ENCODE measurements at regions of chr3 and their contacts with region 1.

Region 1: DNA sequence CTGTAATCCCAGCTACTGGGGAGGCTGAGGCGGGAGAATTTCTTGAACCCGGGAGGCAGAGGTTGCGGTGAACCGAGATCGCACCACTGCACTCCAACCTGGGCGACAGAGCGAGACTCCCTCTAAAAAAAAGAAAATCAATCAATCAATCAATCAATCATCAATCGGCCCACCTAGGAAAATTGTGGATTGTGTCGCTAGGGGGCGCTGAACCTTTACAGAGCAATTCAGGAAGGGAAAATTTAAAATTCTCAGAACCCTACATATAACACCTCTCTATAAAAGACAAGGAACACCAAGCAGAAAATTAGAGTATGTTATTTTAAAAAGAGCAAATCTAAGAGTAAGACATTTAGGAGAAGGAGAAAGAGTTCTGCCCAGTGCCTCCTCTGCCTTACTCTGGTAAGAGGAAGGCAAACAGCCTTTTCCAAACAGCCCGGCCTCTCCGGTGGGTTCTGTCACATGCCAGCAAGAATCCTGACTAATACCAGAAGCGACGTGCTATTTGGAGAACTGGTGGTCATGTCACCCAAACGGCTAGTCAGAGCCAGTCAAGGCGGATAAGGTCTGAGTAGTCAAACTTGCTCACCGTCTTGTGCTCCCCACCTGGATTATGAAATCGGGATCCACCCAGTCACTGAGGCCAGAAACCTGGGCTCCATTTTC is 22.3 kb upstream of the SMCO1 start:
- DNase-seq: peak in 1 of 2 donors; percentile 41
- H3K4me3 ChIP-seq: no peak overlapping the region
- H3K27ac ChIP-seq: no peak overlapping the region
- H3K4me1 ChIP-seq: no peaks in the 10 kb centered on the region
- H3K27me3 ChIP-seq: no peaks in the 10 kb centered on the region
- CTCF ChIP-seq: peak; percentile 56 to 57

Region 2: GRCh38 chr3:196502775-196503195 is 34.7 kb before region 1 on chr3:
- intact Hi-C with region 1: no loop called
- DNase-seq: peak; percentile 54 to 69
- H3K4me3 ChIP-seq: peak overlapping the region; percentile 87 to 98
- H3K27ac ChIP-seq: peak overlapping the region; percentile 95 to 97
- H3K4me1 ChIP-seq: peaks cover 0 to 41% (median 19%) of the 10 kb centered on the region in 4 donors
- H3K27me3 ChIP-seq: no peaks in the 10 kb centered on the region
- CTCF ChIP-seq: no peak

Region 3: DNA sequence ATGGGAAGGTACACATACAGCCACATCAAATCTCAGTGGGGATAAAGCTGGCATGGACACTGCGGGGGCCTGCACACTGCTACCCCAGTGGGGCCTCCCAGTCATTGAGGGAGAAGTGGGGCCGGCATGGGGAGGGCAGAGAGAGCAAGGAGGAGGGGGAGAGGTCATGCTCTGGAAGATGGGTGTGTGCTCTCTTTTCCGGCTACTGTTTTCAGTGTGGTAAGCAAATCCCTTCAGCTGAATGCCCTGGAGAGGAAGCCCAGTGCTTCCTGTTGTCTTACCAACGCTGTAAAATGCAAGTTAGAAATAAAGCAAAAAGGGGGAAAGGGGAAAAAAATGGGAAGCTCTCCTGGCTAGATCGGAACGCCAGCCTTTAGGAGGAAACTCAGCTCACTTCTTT is 132.9 kb after region 1 on chr3:
- intact Hi-C with region 1: loop called (anchors 10 kb)
- DNase-seq: peak in 1 of 2 donors; percentile 50
- H3K4me3 ChIP-seq: no peak overlapping the region
- H3K27ac ChIP-seq: no peak overlapping the region
- H3K4me1 ChIP-seq: no peaks in the 10 kb centered on the region
- H3K27me3 ChIP-seq: peaks cover 0 to 20% of the 10 kb centered on the region in 2 donors
- CTCF ChIP-seq: no peak

Measured in tibial artery (tissue), 4 donors.